GM12878 (cell line): ENCODE measurements at regions of chr5 and their contacts with region 1.

Region 1: DNA sequence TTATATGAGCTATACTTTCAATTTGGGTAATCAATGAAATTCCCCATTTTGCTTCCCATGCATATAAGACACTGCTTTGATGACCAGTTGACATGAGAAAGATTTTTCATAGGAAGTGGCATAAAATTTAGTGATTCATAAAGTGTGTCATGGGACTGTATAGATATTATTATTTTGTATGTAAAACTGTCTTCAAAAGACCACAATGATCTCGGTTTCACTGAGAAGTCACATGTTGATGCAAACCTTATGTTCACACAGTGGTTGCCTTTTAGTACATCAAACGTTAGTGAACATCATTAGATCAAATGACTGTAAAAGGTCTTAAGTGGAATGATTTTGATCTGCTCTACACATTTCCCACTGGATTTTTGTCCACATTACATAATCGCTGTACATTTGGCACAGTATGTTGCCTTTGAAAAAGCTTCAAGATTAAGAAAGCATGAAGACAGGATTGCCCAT is 349.2 kb upstream of the MEF2C start:
- DNase-seq: peak; percentile 96
- ATAC-seq: peak; percentile 90
- H3K4me3 ChIP-seq: 0 out of 2 replicates have a peak overlapping the region, but pooled peaks have one; percentile 25
- H3K27ac ChIP-seq: peak overlapping the region; percentile 97
- H3K4me1 ChIP-seq: peaks cover 43% of the 10 kb centered on the region
- H3K27me3 ChIP-seq: no peaks in the 10 kb centered on the region
- CTCF ChIP-seq: no peak
- EP300 ChIP-seq: peak; percentile 96 to 98
- POLR2A ChIP-seq: no peak
- RAD21 ChIP-seq: no peak

Region 2: GRCh38 chr5:88826646-88827585 is 405.3 kb before region 1 on chr5:
- CTCF ChIA-PET with region 1: interaction called, 3 read pairs
- POLR2A ChIA-PET with region 1: no interaction called
- RAD21 ChIA-PET with region 1: interaction called, 3 read pairs
- SMC1A ChIA-PET with region 1: interaction called, 3 read pairs
- in situ Hi-C with region 1: no loop called
- intact Hi-C with region 1: loop called (anchors 5 kb)
- DNase-seq: peak; percentile 98
- ATAC-seq: peak; percentile 63
- H3K4me3 ChIP-seq: peak overlapping the region; percentile 64; the same call in 1 of the 2 replicates
- H3K27ac ChIP-seq: peak overlapping the region; percentile 80
- H3K4me1 ChIP-seq: peaks cover 23% of the 10 kb centered on the region
- H3K27me3 ChIP-seq: no peaks in the 10 kb centered on the region
- CTCF ChIP-seq: no peak
- EP300 ChIP-seq: peak; percentile 95 to 96
- POLR2A ChIP-seq: peak; percentile 52; the same call in 1 of the 2 replicates
- RAD21 ChIP-seq: no peak

Region 3: GRCh38 chr5:89071101-89071940 is 160.8 kb before region 1 on chr5:
- CTCF ChIA-PET with region 1: no interaction called
- POLR2A ChIA-PET with region 1: no interaction called
- RAD21 ChIA-PET with region 1: interaction called, 17 read pairs
- SMC1A ChIA-PET with region 1: interaction called, 16 read pairs
- in situ Hi-C with region 1: no loop called
- intact Hi-C with region 1: loop called (anchors 5 kb)
- DNase-seq: peak; percentile 33
- ATAC-seq: peak; percentile 92
- H3K4me3 ChIP-seq: peak overlapping the region; percentile 58
- H3K27ac ChIP-seq: peak overlapping the region; percentile 92
- H3K4me1 ChIP-seq: peaks cover 14% of the 10 kb centered on the region
- H3K27me3 ChIP-seq: no peaks in the 10 kb centered on the region
- CTCF ChIP-seq: no peak
- EP300 ChIP-seq: peak; percentile 52 to 66; a peak in 2 of 4 replicates
- POLR2A ChIP-seq: no peak
- RAD21 ChIP-seq: 0 out of 2 replicates have a peak, but pooled peaks have one; percentile 2

Region 4: DNA sequence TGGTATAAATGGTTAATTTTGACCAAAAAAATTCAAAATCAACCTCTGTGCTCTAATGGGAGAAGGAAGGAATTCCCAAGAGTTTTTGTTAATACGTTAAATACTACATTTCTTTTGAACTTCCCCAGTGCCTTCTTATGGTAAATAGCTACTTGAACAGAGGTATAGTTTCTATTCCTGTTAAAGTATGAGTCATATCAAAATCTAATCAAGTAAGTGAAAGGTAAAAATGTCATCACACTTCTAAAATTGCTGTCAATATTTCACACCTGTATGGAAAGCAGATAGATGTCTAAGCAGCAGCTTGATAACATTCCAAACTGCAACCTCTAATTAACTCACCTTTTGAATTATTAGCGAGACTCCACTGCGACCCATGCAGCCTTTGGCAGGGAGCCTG is 135.1 kb before region 1 on chr5:
- CTCF ChIA-PET with region 1: no interaction called
- POLR2A ChIA-PET with region 1: no interaction called
- RAD21 ChIA-PET with region 1: interaction called, 20 read pairs
- SMC1A ChIA-PET with region 1: interaction called, 21 read pairs
- in situ Hi-C with region 1: no loop called
- intact Hi-C with region 1: no loop called
- DNase-seq: peak; percentile 52
- ATAC-seq: peak; percentile 88
- H3K4me3 ChIP-seq: peak overlapping the region; percentile 26; the same call in 1 of the 2 replicates
- H3K27ac ChIP-seq: peak overlapping the region; percentile 52
- H3K4me1 ChIP-seq: peaks cover 12% of the 10 kb centered on the region
- H3K27me3 ChIP-seq: no peaks in the 10 kb centered on the region
- CTCF ChIP-seq: no peak
- EP300 ChIP-seq: peak; percentile 87 to 95
- POLR2A ChIP-seq: no peak
- RAD21 ChIP-seq: no peak

Region 5: GRCh38 chr5:89268460-89268859 is 36.3 kb after region 1 on chr5:
- CTCF ChIA-PET with region 1: interaction called, 10 read pairs
- POLR2A ChIA-PET with region 1: interaction called, 3 read pairs
- RAD21 ChIA-PET with region 1: interaction called, 34 read pairs
- SMC1A ChIA-PET with region 1: interaction called, 55 read pairs
- in situ Hi-C with region 1: no loop called
- intact Hi-C with region 1: loop called (anchors 2 kb)
- DNase-seq: peak; percentile 51
- ATAC-seq: peak; percentile 38
- H3K4me3 ChIP-seq: no peak overlapping the region
- H3K27ac ChIP-seq: peak overlapping the region; percentile 43; the same call in 1 of the 2 replicates
- H3K4me1 ChIP-seq: peaks cover 46% of the 10 kb centered on the region
- H3K27me3 ChIP-seq: no peaks in the 10 kb centered on the region
- CTCF ChIP-seq: no peak
- EP300 ChIP-seq: no peak
- POLR2A ChIP-seq: no peak
- RAD21 ChIP-seq: 0 out of 2 replicates have a peak, but pooled peaks have one; percentile 12

Region 6: GRCh38 chr5:89313804-89314588 is 81.8 kb after region 1 on chr5:
- CTCF ChIA-PET with region 1: interaction called, 12 read pairs
- POLR2A ChIA-PET with region 1: interaction called, 5 read pairs
- RAD21 ChIA-PET with region 1: interaction called, 27 read pairs
- SMC1A ChIA-PET with region 1: interaction called, 27 read pairs
- in situ Hi-C with region 1: no loop called
- intact Hi-C with region 1: no loop called
- DNase-seq: peak; percentile 99
- ATAC-seq: peak; percentile 96
- H3K4me3 ChIP-seq: no peak overlapping the region
- H3K27ac ChIP-seq: peak overlapping the region; percentile 97
- H3K4me1 ChIP-seq: peaks cover 40% of the 10 kb centered on the region
- H3K27me3 ChIP-seq: no peaks in the 10 kb centered on the region
- CTCF ChIP-seq: no peak
- EP300 ChIP-seq: peak; percentile 95 to 98
- POLR2A ChIP-seq: peak; percentile 36; the same call in 1 of the 2 replicates
- RAD21 ChIP-seq: peak; percentile 40

Region 7: DNA sequence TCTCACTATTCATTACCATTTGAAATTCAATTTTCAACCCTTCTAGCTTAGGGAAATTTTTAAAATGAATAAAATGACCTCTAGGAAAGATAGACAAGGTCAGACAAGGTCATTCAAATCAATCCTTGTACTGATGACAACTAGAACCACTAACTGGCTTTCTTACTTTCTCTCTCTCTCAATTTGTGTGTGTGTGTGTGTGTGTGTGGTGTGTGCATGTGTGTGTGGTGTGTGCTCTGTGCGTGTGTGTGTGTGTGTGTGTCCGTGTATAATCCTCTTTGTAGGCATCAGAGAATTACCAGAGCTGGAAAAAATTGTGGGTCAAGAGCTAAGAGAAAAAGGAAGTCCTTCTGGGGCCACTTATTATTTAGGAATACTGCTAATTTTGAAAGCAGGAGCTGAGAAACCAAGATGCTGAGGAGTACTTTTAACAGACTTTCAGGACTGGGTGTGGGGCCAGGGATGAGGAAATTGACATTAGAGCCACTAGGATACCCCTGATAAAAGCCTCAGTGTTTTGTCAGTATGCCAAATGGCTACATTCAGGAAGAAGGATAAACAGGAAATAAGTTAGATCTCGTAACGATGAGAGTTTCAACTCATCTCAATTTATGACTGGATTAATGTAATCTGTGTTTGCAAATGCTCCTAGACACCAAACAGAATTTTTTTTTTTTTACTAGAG is 454.1 kb after region 1 on chr5:
- CTCF ChIA-PET with region 1: no interaction called
- POLR2A ChIA-PET with region 1: no interaction called
- RAD21 ChIA-PET with region 1: no interaction called
- SMC1A ChIA-PET with region 1: no interaction called
- in situ Hi-C with region 1: no loop called
- intact Hi-C with region 1: no loop called
- DNase-seq: no peak
- ATAC-seq: peak; percentile 38; the same call in 2 of the 3 replicates
- H3K4me3 ChIP-seq: no peak overlapping the region
- H3K27ac ChIP-seq: no peak overlapping the region
- H3K4me1 ChIP-seq: no peaks in the 10 kb centered on the region
- H3K27me3 ChIP-seq: no peaks in the 10 kb centered on the region
- CTCF ChIP-seq: no peak
- EP300 ChIP-seq: no peak
- POLR2A ChIP-seq: no peak
- RAD21 ChIP-seq: no peak